ENCODE measurements at regions of chr16 and their contacts with region 1.

Region 1: GRCh38 chr16:16010194-16010593 is 60.8 kb downstream of the ABCC1 start:
- DNase-seq: no peak
- ATAC-seq: no peak

Region 2: DNA sequence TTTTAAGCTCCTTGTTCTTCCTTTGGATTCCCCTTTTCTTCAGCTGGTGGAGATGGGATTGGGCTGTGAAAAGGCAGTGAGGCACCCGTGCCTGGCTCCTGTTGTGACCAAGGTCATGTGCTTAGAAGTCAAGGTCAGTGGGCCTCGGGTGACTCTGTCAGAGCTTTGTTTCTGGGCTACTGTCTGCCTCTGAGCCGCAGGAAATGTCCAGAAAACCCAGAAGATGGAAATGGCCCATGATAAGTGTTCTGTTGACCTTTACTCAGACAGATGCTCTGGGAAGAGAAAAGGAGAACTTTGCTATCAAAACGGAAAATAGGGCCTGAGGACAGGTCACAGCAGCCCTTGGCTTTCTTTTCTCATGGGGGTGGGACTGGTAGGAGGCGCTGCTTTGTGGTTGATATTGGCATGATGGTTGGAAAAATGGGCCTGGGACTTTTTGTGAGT is 57.9 kb before region 1 on chr16:
- intact Hi-C with region 1: loop called (anchors 2 kb)
- DNase-seq: no peak
- ATAC-seq: peak; percentile 49